Activated CD4-positive, alpha-beta T cell treated with anti-CD3 and anti-CD28 coated beads for 36 hours (primary cell): ENCODE measurements at regions of chr19 and their contacts with region 1.

Region 1: GRCh38 chr19:4524808-4525562 is 6.7 kb upstream of the PLIN4 start:
- DNase-seq: peak; percentile 86
- ATAC-seq: peak; percentile 93
- H3K4me3 Mint-ChIP-seq: no peak overlapping the region
- H3K27ac Mint-ChIP-seq: no peak overlapping the region
- H3K4me1 Mint-ChIP-seq: no peaks in the 10 kb centered on the region
- H3K27me3 Mint-ChIP-seq: peaks cover 2% of the 10 kb centered on the region

Region 2: GRCh38 chr19:4457654-4458395 is 67.2 kb before region 1 on chr19 and contains the start of gene UBXN6:
- CTCF ChIA-PET with region 1: no interaction called
- POLR2A ChIA-PET with region 1: no interaction called
- intact Hi-C with region 1: loop called in 1 of 2 experiments (anchors 2 kb)
- DNase-seq: peak; percentile 99
- ATAC-seq: peak; percentile 93
- H3K4me3 Mint-ChIP-seq: peak within 1 kb of the TSS; percentile 86
- H3K27ac Mint-ChIP-seq: peak within 1 kb of the TSS; percentile 86
- H3K4me1 Mint-ChIP-seq: peaks cover 19% of the 10 kb centered on the region
- H3K27me3 Mint-ChIP-seq: no peaks in the 10 kb centered on the region
- total RNA-seq, gene UBXN6: 32.9 to 38.4 TPM

Region 3: DNA sequence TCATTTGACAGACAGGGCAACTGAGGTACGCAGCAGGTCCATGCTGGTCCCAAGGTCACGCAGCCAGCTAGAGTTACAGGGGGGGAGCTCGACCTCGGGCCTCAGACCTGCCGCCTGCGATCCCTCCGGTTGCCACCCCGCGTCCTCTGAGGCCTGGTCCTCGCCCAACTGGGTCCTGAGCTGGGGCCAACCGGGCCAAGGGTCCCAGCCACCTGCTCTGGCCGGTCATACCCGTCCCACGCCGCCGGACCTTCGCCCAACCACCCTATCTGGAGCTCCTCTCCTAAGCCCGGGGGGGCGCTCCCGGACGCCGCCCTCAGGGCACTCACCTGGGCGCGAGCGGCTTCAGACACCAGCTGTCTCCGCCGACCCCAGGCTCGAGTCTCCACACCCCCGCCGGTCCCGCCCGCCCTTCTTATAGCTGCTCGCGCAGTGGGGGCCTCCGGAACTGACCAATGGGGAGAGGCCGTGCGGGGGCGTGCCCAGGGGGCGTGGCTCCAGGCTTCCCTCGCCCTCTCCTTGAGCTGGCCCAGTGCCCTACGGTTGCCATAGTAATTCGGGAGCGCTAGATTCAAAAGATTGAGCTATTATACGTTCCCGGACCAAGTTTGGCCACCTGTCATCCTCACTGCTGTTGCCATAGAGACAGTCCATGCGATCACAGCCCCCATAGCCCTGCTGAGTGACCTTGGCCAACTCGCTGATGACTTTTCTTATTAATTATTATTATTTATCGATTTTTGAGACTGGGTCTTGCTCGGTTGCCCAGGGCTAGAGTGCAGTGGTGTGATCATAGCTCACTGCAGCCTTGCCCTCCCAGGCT is 10.1 kb after region 1 on chr19 and contains the start of gene PLIN5:
- CTCF ChIA-PET with region 1: interaction called, 35 read pairs
- POLR2A ChIA-PET with region 1: interaction called, 3 read pairs
- intact Hi-C with region 1: no loop called
- DNase-seq: peak; percentile 65
- ATAC-seq: peak; percentile 55
- H3K4me3 Mint-ChIP-seq: no peak within 1 kb of the TSS
- H3K27ac Mint-ChIP-seq: no peak within 1 kb of the TSS
- H3K4me1 Mint-ChIP-seq: peaks cover 12% of the 10 kb centered on the region
- H3K27me3 Mint-ChIP-seq: peaks cover 7% of the 10 kb centered on the region
- total RNA-seq, gene PLIN5: not detected